ENCODE measurements at regions of chr5 and their contacts with region 1.

Region 1: DNA sequence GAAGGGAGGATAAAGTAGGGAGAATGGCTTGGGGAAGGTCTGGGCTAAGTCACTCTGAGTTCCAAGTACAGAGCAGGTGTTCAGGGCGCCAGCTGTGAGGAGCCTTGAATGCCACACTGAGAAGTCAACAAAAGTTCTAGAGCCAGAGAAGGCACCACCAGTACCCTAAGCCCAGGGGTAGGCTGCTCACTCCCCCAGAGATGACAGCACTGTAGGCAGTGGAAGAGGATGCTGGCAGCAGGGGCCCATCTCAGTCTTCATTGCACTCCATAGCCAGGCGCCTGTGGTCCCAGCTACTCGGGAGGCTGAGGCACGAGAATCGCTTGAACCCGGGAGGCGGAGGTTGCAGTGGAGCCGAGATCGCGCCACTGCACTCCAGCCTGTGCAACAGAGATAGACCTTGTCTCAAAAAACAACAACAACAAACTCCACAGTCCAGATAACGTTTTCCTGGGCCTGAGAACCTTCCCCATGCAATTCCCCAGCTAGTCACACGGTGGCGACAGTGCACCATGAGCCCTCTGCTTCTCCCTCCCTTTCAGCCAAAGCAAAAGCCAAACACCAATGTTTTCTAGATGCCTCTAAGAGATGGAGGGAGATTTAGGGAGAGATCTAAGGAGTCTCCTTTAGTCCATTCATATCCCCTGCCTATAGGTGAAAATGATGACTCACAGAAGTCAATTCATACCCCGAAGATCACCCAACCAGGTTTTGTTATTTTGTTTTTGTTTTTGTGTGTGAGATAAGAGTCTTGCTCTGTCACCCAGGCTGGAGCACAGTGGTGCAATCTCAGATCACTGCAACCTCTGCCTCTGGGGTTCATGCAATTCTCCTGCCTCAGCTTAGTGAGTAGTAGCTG is 19.8 kb upstream of the NSD1 start:
- DNase-seq: peak; percentile 83
- H3K4me3 ChIP-seq: no peak overlapping the region
- H3K27ac ChIP-seq: peak overlapping the region; percentile 11
- H3K4me1 ChIP-seq: peaks cover 53% of the 10 kb centered on the region
- CTCF ChIP-seq: peak; percentile 99

Region 2: DNA sequence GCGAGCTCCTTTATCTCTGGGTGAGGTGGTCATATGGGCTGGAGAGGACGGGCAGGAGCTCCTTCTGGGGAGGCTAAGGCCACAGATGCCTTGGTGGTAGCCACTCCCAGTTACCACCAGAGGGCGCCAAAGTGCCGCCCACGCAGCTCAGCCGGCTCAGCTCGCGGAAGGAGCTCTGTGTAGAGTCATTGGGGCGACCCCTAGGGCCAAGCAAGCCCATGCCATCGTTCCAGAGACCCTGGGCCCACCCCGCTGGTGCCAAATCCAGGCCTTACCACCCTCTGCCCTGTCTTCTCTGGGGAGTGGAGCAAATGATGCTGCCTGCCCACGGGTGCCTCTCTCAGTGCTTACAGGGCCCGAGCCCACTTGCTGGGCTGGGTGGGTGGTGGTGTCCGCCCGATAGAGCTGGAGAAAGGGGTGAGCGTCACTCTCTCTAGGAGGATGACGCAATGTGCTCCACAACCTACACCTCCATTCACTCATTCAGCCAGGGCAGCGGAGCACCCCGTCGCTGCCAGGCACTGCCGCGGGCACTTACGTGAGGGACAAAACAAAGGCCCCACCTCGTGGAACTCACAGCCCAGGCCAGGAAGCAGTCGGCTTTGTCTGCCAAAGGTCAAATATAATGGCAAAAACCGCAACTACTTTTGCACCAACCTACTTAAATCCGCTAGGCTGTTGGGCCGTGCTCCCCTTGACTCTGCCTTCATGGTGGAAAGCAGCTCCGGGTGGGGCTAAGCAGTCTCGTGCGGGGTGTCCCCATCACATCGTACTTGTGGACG is 452.7 kb before region 1 on chr5:
- CTCF ChIA-PET with region 1: interaction called, 11 read pairs
- POLR2A ChIA-PET with region 1: interaction called, 5 read pairs
- intact Hi-C with region 1: loop called (anchors 1 kb)
- DNase-seq: peak; percentile 86
- H3K4me3 ChIP-seq: no peak overlapping the region
- H3K27ac ChIP-seq: no peak overlapping the region
- H3K4me1 ChIP-seq: peaks cover 5% of the 10 kb centered on the region
- CTCF ChIP-seq: peak; percentile 94

Region 3: GRCh38 chr5:176948458-176948857 is 165.3 kb before region 1 on chr5:
- CTCF ChIA-PET with region 1: no interaction called
- POLR2A ChIA-PET with region 1: no interaction called
- intact Hi-C with region 1: no loop called
- DNase-seq: no peak
- H3K4me3 ChIP-seq: no peak overlapping the region
- H3K27ac ChIP-seq: no peak overlapping the region
- H3K4me1 ChIP-seq: no peaks in the 10 kb centered on the region
- CTCF ChIP-seq: no peak

Region 4: DNA sequence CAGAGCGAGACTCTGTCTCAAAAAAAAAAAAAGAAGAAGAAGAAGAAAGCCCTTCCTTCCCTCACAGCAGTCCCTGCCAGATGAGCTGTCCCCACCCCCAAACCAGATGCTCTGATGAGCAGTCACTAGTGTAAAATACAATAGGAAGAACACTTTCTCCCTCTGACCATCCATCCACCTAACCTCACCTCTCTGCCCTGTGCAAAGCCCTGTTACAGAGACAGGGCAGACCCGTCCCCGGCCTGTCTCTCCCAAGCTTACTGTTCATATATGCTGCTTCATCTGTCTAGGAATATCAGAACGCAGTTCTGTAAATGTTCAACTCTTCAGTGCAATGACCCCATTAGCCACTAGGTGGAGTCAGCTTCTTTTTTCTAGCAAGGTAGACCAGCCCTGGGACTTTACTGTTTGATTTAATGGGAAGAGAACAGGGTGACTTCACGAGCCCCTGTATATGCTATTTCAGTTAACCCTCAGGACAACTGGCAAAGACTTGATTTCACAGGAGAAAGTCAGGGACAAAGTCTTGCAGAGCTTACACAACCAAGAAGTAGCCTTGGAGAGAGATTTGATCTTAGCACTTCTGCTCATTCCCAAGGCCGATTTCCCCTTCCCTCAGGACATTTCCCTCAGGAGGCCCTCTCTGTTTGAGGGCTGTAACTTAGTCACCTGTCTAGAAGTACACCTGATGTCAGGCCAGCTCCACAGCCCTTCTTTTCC is 42.0 kb before region 1 on chr5:
- CTCF ChIA-PET with region 1: interaction called, 6 read pairs
- POLR2A ChIA-PET with region 1: interaction called, 3 read pairs
- intact Hi-C with region 1: loop called (anchors 1 kb)
- DNase-seq: peak; percentile 91
- H3K4me3 ChIP-seq: no peak overlapping the region
- H3K27ac ChIP-seq: peak overlapping the region; percentile 63
- H3K4me1 ChIP-seq: peaks cover 25% of the 10 kb centered on the region
- CTCF ChIP-seq: peak; percentile 97

Region 5: DNA sequence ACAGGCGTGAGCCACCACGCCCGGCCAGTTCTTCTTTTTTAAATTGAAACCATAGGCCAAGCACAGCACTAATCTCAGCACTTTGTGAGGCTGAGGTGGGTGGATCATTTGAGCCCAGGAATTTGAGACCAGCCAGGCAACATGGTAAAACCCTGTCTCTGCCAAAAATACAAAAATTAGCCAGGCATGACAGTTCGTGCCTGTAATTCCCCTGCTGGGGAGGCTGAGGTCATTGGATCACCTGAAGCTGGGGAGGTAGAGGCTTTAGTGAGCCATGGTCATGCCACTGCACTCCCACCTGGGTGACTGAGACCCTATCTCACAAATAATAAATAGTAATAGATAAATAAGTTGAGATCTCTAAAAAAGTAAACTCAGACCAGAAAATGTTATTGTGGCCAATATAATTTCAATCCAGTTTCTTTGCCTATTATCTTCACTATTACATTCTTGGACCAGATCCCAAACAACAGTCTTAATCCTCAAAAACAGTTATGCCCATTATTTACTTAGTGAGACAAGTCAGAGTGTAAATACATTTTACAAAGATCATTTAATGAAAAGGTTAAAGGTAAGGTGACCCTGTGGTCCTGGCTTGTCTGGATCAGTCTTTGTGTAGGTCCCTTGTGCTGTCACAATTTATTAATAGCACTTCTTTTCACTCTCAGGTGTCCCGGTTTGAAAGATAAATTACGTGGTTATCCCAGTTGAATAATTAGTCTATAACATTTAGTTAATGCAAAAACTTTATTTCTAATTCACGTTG is 136.1 kb after region 1 on chr5:
- CTCF ChIA-PET with region 1: no interaction called
- POLR2A ChIA-PET with region 1: interaction called, 4 read pairs
- intact Hi-C with region 1: loop called (anchors 5 kb)
- DNase-seq: no peak
- H3K4me3 ChIP-seq: no peak overlapping the region
- H3K27ac ChIP-seq: no peak overlapping the region
- H3K4me1 ChIP-seq: no peaks in the 10 kb centered on the region
- CTCF ChIP-seq: no peak

Region 6: GRCh38 chr5:177303121-177303924 is 189.5 kb after region 1 on chr5 and contains the starts of genes PRELID1 and RAB24:
- CTCF ChIA-PET with region 1: interaction called, 3 read pairs
- POLR2A ChIA-PET with region 1: interaction called, 4 read pairs
- intact Hi-C with region 1: loop called (anchors 1 kb)
- DNase-seq: peak; percentile 92
- H3K4me3 ChIP-seq: peak within 1 kb of the TSS; percentile 100
- H3K27ac ChIP-seq: peak within 1 kb of the TSS; percentile 73
- H3K4me1 ChIP-seq: peaks cover 69% of the 10 kb centered on the region
- CTCF ChIP-seq: peak; percentile 60
- total RNA-seq, gene PRELID1: 217 and 249 TPM in 2 replicates
- total RNA-seq, gene RAB24: 25.8 and 43.1 TPM in 2 replicates

Region 7: DNA sequence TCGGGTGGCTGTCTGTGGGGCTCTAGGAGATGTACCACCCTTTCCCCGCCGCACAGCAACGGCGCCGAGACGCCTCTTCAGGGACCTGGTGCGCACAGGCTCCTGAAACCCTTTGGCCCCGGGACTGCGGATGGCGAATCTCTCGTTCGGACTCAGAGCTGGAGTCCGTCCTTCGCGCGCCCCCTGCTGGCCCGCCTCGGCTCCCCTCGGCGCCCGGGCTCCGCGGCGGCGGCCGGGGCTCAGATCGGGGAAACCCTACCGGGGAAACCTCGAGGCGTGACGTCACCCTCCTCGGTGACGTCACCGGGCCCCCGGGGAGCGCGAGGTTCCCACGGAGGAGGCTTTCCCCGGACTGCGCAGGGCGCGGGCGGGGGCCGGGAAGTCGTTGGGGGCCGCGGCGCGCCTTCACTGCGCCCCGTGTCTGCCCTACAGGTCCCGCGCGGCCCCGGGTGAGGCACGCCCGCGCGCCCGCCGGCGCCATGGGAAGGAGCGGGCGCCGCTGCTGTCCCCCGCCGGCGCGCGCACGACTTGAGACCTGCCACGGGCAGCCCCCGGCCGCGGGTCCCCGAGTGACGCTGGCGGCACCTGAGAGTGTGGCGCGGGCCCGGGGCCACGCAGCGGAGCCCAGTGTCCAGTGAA is 340.7 kb after region 1 on chr5:
- CTCF ChIA-PET with region 1: interaction called, 3 read pairs
- POLR2A ChIA-PET with region 1: no interaction called
- intact Hi-C with region 1: loop called (anchors 5 kb)
- DNase-seq: peak; percentile 91
- H3K4me3 ChIP-seq: peak overlapping the region; percentile 76
- H3K27ac ChIP-seq: peak overlapping the region; percentile 90
- H3K4me1 ChIP-seq: peaks cover 28% of the 10 kb centered on the region
- CTCF ChIP-seq: peak; percentile 84

Measured in OCI-LY7 (cell line).